A673 (cell line): ENCODE measurements at regions of chr12 and their contacts with region 1.

Region 1: GRCh38 chr12:122635471-122635870 is 67.7 kb downstream of the HCAR2 start:
- DNase-seq: no peak
- H3K4me3 ChIP-seq: no peak overlapping the region
- H3K27ac ChIP-seq: no peak overlapping the region
- H3K4me1 ChIP-seq: no peaks in the 10 kb centered on the region
- H3K27me3 ChIP-seq: no peaks in the 10 kb centered on the region
- CTCF ChIP-seq: no peak

Region 2: GRCh38 chr12:122752464-122753318 is 117.2 kb after region 1 on chr12 and contains the start of gene DENR:
- CTCF ChIA-PET with region 1: interaction called, 4 read pairs
- POLR2A ChIA-PET with region 1: no interaction called
- intact Hi-C with region 1: loop called (anchors 5 kb)
- DNase-seq: peak; percentile 98
- H3K4me3 ChIP-seq: peak within 1 kb of the TSS; percentile 72
- H3K27ac ChIP-seq: peak within 1 kb of the TSS; percentile 91
- H3K4me1 ChIP-seq: peaks cover 15% of the 10 kb centered on the region
- H3K27me3 ChIP-seq: no peaks in the 10 kb centered on the region
- CTCF ChIP-seq: peak; percentile 93
- total RNA-seq, gene DENR: 104 and 116 TPM in 2 replicates